ENCODE measurements at regions of chr12 and their contacts with region 1.

Region 1: GRCh38 chr12:102484428-102484958 is 4.1 kb upstream of the IGF1 start:
- DNase-seq: peak; percentile 21 to 68 (median 48)
- H3K4me3 ChIP-seq: no peak overlapping the region
- H3K27ac ChIP-seq: no peak overlapping the region
- H3K4me1 ChIP-seq: no peaks in the 10 kb centered on the region
- H3K27me3 ChIP-seq: no peaks in the 10 kb centered on the region
- CTCF ChIP-seq: peak; percentile 37 to 58 (median 43)
- EP300 ChIP-seq: no peak
- POLR2A ChIP-seq: no peak

Region 2: DNA sequence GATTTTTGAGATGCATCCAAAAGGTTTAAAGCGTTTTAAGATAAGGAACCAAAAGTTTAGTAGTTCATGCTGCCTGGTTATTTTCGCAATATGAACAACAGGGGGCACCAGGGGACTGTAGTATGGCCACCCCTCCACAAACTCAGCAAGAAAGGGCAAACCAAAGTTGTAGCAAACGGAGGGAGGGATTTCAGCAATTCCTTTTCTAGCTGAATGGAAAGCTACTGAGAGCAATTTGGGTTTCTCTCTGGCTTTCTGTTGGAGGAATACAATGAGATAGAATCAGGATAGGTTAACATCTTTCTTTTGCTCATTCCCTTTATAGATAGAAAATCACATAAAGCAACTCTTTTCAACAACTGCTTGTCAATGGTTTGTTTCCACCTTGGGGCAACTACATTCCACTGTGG is 544.6 kb before region 1 on chr12:
- intact Hi-C with region 1: loop called in 1 of 4 experiments (anchors 10 kb)
- DNase-seq: peak; percentile 36 to 72 (median 46)
- H3K4me3 ChIP-seq: no peak overlapping the region
- H3K27ac ChIP-seq: no peak overlapping the region
- H3K4me1 ChIP-seq: peaks cover 6% of the 10 kb centered on the region
- H3K27me3 ChIP-seq: no peaks in the 10 kb centered on the region
- CTCF ChIP-seq: peak; percentile 26 to 67 (median 64)
- EP300 ChIP-seq: no peak
- POLR2A ChIP-seq: no peak

Region 3: GRCh38 chr12:102326987-102327386 is 157.5 kb before region 1 on chr12:
- intact Hi-C with region 1: no loop called
- DNase-seq: no peak
- H3K4me3 ChIP-seq: no peak overlapping the region
- H3K27ac ChIP-seq: no peak overlapping the region
- H3K4me1 ChIP-seq: no peaks in the 10 kb centered on the region
- H3K27me3 ChIP-seq: no peaks in the 10 kb centered on the region
- CTCF ChIP-seq: no peak
- EP300 ChIP-seq: no peak
- POLR2A ChIP-seq: no peak

Region 4: DNA sequence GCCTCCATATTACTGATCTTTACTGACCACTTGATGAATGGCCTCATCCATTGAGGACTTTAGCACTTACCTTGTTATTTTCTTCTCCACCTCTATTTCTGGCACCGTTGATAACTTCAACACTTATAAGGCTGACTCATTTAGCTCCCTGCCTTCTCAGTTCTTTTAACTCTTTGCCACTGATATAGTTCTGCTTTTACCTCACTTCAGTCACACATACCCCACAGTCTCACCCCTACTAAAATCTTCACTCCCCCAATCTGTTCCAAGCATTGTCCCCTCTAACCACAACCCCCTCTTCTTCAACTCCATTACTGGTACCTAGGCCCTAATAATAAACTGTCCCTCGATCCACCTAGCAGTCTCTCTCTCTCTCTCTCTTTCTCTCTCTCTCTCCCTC is 291.5 kb after region 1 on chr12:
- intact Hi-C with region 1: loop called in 1 of 4 experiments (anchors 10 kb)
- DNase-seq: no peak
- H3K4me3 ChIP-seq: no peak overlapping the region
- H3K27ac ChIP-seq: no peak overlapping the region
- H3K4me1 ChIP-seq: no peaks in the 10 kb centered on the region
- H3K27me3 ChIP-seq: no peaks in the 10 kb centered on the region
- CTCF ChIP-seq: no peak
- EP300 ChIP-seq: no peak
- POLR2A ChIP-seq: no peak